Activated CD4-positive, alpha-beta memory T cell treated with anti-CD3 and anti-CD28 coated beads for 36 hours (primary cell): ENCODE measurements at regions of chr2 and their contacts with region 1.

Region 1: DNA sequence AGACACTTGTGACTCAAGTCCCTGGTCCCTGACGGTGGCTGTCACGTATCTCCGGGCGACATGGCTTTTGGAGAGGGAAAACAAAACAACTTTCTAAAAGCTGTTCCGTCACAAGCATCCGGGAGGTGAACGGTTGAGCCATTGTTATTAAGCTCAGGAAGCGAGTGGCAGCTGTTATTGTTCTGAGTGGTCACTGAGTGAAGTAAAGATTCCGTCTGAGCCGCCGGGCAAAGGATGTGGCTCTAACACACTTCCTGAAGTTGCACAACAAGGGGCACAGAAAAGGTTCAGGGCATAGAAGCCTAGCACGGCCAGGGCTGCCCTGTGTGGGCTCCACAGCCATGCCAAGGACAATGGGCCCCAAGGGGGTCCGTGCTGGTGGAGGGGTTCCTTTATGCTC is 24.3 kb downstream of the INPP5D start:
- DNase-seq: peak; percentile 83
- H3K4me3 Mint-ChIP-seq: peak overlapping the region; percentile 70
- H3K27ac Mint-ChIP-seq: peak overlapping the region; percentile 98
- H3K4me1 Mint-ChIP-seq: peaks cover 84% of the 10 kb centered on the region
- H3K27me3 Mint-ChIP-seq: no peaks in the 10 kb centered on the region

Region 2: GRCh38 chr2:233100192-233100998 is 15.9 kb after region 1 on chr2:
- CTCF ChIA-PET with region 1: interaction called, 16 read pairs
- POLR2A ChIA-PET with region 1: interaction called, 11 read pairs
- intact Hi-C with region 1: loop called (anchors 1 kb)
- DNase-seq: peak; percentile 87
- H3K4me3 Mint-ChIP-seq: peak overlapping the region; percentile 17
- H3K27ac Mint-ChIP-seq: peak overlapping the region; percentile 68
- H3K4me1 Mint-ChIP-seq: peaks cover 61% of the 10 kb centered on the region
- H3K27me3 Mint-ChIP-seq: no peaks in the 10 kb centered on the region

Region 3: GRCh38 chr2:233234264-233234663 is 149.8 kb after region 1 on chr2:
- CTCF ChIA-PET with region 1: interaction called, 5 read pairs
- POLR2A ChIA-PET with region 1: interaction called, 6 read pairs
- intact Hi-C with region 1: loop called (anchors 2 kb)
- DNase-seq: peak; percentile 52
- H3K4me3 Mint-ChIP-seq: no peak overlapping the region
- H3K27ac Mint-ChIP-seq: peak overlapping the region; percentile 76
- H3K4me1 Mint-ChIP-seq: peaks cover 47% of the 10 kb centered on the region
- H3K27me3 Mint-ChIP-seq: no peaks in the 10 kb centered on the region

Region 4: DNA sequence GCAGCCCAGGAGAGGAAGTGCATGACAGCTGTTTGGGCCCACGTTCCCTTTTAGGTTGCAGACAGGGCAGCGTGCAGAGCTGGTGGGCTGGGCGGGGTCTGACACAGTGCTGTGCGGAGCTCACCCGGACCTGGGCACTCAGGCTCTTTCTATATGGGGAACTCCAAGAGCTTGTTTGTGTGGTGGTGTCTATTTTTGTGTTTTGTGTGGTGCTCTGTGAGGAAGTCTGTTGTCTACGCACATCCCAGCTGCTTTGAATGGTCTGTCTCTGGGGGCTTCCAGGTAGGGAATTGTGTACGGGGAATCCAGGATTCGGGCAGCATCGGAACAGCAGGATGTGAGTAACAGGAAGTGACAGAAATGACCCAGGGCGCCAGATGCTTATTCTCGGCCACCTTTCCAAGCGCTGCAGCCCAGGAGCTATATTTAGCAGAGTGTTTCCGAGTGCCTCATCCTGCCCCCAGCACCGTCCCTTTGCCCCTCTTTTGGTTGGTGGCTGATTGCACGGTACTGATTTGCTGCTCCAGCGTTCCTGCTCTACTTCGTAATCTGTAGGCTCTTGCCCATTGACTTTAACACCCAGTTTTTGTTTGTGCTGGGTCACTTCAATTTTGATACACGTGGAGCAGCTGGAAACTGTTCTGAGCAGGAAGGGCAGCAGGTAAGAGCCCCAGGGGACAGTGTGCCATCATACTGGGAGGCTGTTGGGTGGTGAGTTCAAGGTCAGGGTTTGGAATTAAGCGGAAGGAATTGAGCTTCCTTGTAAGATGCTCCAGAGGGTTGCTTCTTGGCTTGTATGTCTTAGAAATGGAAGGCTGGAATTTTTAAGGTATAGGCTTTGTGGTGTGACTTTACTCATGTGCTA is 334.5 kb after region 1 on chr2:
- CTCF ChIA-PET with region 1: no interaction called
- POLR2A ChIA-PET with region 1: no interaction called
- intact Hi-C with region 1: loop called (anchors 5 kb)
- DNase-seq: peak; percentile 72
- H3K4me3 Mint-ChIP-seq: peak overlapping the region; percentile 63
- H3K27ac Mint-ChIP-seq: peak overlapping the region; percentile 85
- H3K4me1 Mint-ChIP-seq: peaks cover 92% of the 10 kb centered on the region
- H3K27me3 Mint-ChIP-seq: no peaks in the 10 kb centered on the region